Caco-2 (cell line): ENCODE measurements at regions of chr11 and their contacts with region 1.

Region 1: GRCh38 chr11:45683271-45684058 is 18.0 kb upstream of the CHST1 start:
- DNase-seq: no peak
- H3K4me3 ChIP-seq: no peak overlapping the region
- H3K4me3 Mint-ChIP-seq: no peak overlapping the region
- H3K27ac Mint-ChIP-seq: no peak overlapping the region
- H3K4me1 ChIP-seq: no peaks in the 10 kb centered on the region
- H3K4me1 Mint-ChIP-seq: no peaks in the 10 kb centered on the region
- H3K27me3 ChIP-seq: peaks cover 7% of the 10 kb centered on the region
- H3K27me3 Mint-ChIP-seq: peaks cover 16% of the 10 kb centered on the region
- CTCF ChIP-seq: no peak

Region 2: DNA sequence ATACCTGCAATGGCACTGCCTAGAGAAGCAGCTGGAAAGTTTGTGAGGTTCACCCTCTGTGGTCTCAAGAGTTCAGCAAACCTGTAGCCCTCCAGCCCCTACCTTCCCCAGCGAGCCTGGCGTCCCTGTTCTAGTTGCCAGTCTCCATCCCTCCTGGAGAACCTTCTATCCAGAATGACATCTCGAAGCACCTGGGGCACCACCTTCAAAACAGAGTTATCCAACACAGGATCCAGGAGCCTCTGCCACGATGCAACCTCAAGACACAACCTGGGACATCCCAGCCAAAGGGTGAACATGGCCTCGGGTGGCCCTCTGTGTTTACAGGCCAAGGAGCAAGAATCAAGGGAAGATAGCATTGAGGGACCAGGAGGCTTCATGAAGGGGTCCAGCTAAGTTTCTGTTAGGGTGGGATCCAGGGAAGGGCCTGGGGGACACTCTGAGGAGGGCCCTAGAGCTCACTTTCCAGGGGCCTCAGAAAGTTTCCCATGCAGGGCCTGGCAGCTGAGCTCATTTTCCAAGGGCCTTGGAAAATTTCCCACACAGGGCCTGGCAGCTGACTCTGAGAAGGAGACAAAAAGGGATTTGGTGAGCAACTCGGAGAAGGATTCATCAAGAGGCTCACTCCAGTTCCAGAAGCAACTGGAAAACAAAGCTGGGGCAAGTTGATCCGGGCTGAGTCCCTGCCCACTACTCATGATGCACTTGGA is 360.4 kb before region 1 on chr11:
- CTCF ChIA-PET with region 1: no interaction called
- POLR2A ChIA-PET with region 1: no interaction called
- intact Hi-C with region 1: no loop called
- DNase-seq: no peak
- H3K4me3 ChIP-seq: no peak overlapping the region
- H3K4me3 Mint-ChIP-seq: no peak overlapping the region
- H3K27ac Mint-ChIP-seq: no peak overlapping the region
- H3K4me1 ChIP-seq: no peaks in the 10 kb centered on the region
- H3K4me1 Mint-ChIP-seq: no peaks in the 10 kb centered on the region
- H3K27me3 ChIP-seq: peaks cover 1% of the 10 kb centered on the region; the same call in 1 of the 2 replicates
- H3K27me3 Mint-ChIP-seq: peaks cover 13% of the 10 kb centered on the region
- CTCF ChIP-seq: no peak

Region 3: DNA sequence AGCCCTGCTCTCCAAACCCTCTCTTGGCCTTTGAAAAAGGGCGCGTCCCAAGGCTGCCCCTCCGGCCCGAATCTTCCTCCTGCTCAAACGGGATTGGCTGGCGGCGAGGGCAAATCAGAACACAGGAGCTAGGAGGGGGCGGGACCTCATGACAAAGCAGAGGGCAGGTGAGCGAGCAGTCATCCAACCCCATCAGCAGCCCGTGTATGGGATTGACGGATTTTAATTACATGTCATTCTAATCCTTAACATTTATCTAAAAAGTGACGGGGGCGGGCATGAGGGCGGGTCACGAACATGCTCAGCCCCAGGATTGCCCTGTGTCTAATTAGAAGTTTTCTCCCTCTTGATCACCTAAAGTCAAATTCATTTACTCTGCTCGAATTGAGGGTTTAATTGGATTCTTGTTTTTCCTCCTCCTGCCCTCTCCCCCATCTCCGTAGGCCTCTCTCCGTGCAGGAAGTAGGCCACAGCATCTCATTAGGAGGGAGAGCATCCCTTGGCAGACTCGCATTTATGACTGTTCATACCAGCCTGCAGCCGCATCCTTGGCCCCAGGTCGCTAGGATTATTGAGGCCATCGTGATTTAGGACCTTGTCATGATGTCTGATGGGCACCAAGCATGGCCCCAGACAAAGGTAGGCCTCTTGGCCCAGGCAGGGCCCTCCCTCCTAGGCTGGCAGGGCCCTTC is 165.2 kb before region 1 on chr11:
- CTCF ChIA-PET with region 1: no interaction called
- POLR2A ChIA-PET with region 1: no interaction called
- intact Hi-C with region 1: no loop called
- DNase-seq: no peak
- H3K4me3 ChIP-seq: no peak overlapping the region
- H3K4me3 Mint-ChIP-seq: no peak overlapping the region
- H3K27ac Mint-ChIP-seq: no peak overlapping the region
- H3K4me1 ChIP-seq: no peaks in the 10 kb centered on the region
- H3K4me1 Mint-ChIP-seq: no peaks in the 10 kb centered on the region
- H3K27me3 ChIP-seq: peaks cover 1% of the 10 kb centered on the region; the same call in 1 of the 2 replicates
- H3K27me3 Mint-ChIP-seq: peaks cover 9% of the 10 kb centered on the region
- CTCF ChIP-seq: no peak

Region 4: GRCh38 chr11:45662665-45663485 is 20.6 kb before region 1 on chr11:
- CTCF ChIA-PET with region 1: no interaction called
- POLR2A ChIA-PET with region 1: no interaction called
- intact Hi-C with region 1: loop called (anchors 1 kb)
- DNase-seq: no peak
- H3K4me3 ChIP-seq: no peak overlapping the region
- H3K4me3 Mint-ChIP-seq: no peak overlapping the region
- H3K27ac Mint-ChIP-seq: no peak overlapping the region
- H3K4me1 ChIP-seq: peaks cover 8% of the 10 kb centered on the region
- H3K4me1 Mint-ChIP-seq: no peaks in the 10 kb centered on the region
- H3K27me3 ChIP-seq: peaks cover 19% of the 10 kb centered on the region
- H3K27me3 Mint-ChIP-seq: peaks cover 45% of the 10 kb centered on the region
- CTCF ChIP-seq: no peak